Naive thymus-derived CD8-positive, alpha-beta T cell (primary cell): ENCODE measurements at regions of chrX and their contacts with region 1.

Region 1: GRCh38 chrX:19887911-19888879 is 795 bp upstream of the SH3KBP1 start:
- DNase-seq: peak; percentile 11 to 71 (median 44)
- ATAC-seq: peak; percentile 36 to 57
- H3K4me3 Mint-ChIP-seq: peak overlapping the region; percentile 67 to 86 (median 78)
- H3K27ac Mint-ChIP-seq: peak overlapping the region; percentile 68 to 95 (median 87)
- H3K4me1 Mint-ChIP-seq: peaks cover 15 to 49% (median 35%) of the 10 kb centered on the region in 4 donors
- H3K27me3 Mint-ChIP-seq: no peaks in the 10 kb centered on the region

Region 2: GRCh38 chrX:19704132-19704531 is 184.1 kb before region 1 on chrX:
- POLR2A ChIA-PET with region 1: interaction called, 11 read pairs
- DNase-seq: no peak
- ATAC-seq: no peak
- H3K4me3 Mint-ChIP-seq: no peak overlapping the region
- H3K27ac Mint-ChIP-seq: peak overlapping the region in 2 of 10 donors; percentile 35 to 59
- H3K4me1 Mint-ChIP-seq: peaks cover 19 to 58% (median 42%) of the 10 kb centered on the region in 4 donors
- H3K27me3 Mint-ChIP-seq: no peaks in the 10 kb centered on the region

Region 3: DNA sequence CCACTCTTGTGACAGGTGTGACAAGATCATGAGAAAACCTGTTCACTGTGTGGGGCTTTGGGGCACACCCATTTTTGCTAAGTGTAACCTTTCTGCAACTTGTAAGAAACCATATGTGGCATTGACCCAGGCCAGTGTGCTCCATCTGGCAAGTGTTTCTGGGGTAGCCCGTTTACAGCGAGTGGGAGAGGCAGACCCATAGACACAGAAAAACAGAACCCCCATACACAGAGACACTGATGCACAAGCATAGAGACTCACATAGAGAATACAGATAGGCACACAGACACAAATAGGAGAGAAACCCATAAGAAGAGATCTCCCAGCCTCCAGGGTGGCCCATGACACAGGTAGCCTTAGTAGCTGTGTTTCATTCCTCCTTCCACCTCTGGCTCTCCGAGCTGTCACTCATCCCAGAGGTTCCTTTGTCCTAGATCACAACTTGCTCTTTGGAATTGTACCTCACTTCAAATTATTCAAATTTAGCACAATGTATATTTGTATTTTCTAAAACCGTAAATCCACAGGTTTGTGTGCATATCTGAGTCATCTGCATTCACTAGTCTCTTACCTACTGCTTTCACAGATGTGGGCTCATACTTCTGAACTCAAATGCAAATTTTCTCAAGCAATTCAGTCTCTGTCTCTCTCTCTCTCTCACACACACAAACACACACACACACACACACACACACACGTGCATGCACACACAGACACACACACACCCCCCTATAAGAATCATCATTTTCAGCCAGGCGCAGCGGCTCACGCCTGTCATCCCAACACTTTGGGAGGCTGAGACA is 115.2 kb before region 1 on chrX:
- POLR2A ChIA-PET with region 1: no interaction called
- DNase-seq: no peak
- ATAC-seq: peak in 1 of 2 donors; percentile 48
- H3K4me3 Mint-ChIP-seq: peak overlapping the region; percentile 30 to 71 (median 63)
- H3K27ac Mint-ChIP-seq: peak overlapping the region; percentile 42 to 92 (median 88)
- H3K4me1 Mint-ChIP-seq: peaks cover 24 to 84% (median 68%) of the 10 kb centered on the region in 4 donors
- H3K27me3 Mint-ChIP-seq: no peaks in the 10 kb centered on the region

Region 4: DNA sequence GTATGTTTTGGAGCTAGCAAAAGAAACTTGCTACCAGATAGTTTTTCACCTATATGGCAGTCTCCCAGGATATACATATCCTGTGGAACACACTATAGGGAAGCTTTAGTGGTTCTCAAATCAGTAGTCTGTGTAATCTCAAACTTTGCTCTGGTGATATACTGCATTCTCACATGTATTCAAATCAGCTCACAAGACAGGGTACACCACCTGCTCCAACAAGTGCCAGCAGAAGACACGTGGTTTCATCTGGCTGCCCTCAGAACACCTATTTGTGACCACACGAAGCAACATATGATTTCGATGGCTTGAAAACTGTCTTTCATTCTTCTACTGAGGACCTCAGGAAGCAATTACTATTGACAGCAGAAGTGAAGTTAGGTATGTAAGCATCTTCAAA is 65.0 kb after region 1 on chrX:
- POLR2A ChIA-PET with region 1: no interaction called
- DNase-seq: no peak
- ATAC-seq: no peak
- H3K4me3 Mint-ChIP-seq: no peak overlapping the region
- H3K27ac Mint-ChIP-seq: no peak overlapping the region
- H3K4me1 Mint-ChIP-seq: peaks cover 0 to under 1% (median 0%) of the 10 kb centered on the region in 4 donors
- H3K27me3 Mint-ChIP-seq: no peaks in the 10 kb centered on the region

Region 5: GRCh38 chrX:20402956-20403355 is 514.8 kb after region 1 on chrX:
- POLR2A ChIA-PET with region 1: no interaction called
- DNase-seq: no peak
- ATAC-seq: no peak
- H3K4me3 Mint-ChIP-seq: no peak overlapping the region
- H3K27ac Mint-ChIP-seq: peak overlapping the region in 1 of 10 donors; percentile 17
- H3K4me1 Mint-ChIP-seq: peaks cover 7 to 18% (median 13%) of the 10 kb centered on the region in 4 donors
- H3K27me3 Mint-ChIP-seq: no peaks in the 10 kb centered on the region